Left ventricle myocardium superior (tissue), 1 donor: ENCODE measurements at regions of chr3 and their contacts with region 1.

Region 1: GRCh38 chr3:73432023-73432705 is 192.6 kb downstream of the PDZRN3 start:
- DNase-seq: peak; percentile 35
- ATAC-seq: peak; percentile 25

Region 2: DNA sequence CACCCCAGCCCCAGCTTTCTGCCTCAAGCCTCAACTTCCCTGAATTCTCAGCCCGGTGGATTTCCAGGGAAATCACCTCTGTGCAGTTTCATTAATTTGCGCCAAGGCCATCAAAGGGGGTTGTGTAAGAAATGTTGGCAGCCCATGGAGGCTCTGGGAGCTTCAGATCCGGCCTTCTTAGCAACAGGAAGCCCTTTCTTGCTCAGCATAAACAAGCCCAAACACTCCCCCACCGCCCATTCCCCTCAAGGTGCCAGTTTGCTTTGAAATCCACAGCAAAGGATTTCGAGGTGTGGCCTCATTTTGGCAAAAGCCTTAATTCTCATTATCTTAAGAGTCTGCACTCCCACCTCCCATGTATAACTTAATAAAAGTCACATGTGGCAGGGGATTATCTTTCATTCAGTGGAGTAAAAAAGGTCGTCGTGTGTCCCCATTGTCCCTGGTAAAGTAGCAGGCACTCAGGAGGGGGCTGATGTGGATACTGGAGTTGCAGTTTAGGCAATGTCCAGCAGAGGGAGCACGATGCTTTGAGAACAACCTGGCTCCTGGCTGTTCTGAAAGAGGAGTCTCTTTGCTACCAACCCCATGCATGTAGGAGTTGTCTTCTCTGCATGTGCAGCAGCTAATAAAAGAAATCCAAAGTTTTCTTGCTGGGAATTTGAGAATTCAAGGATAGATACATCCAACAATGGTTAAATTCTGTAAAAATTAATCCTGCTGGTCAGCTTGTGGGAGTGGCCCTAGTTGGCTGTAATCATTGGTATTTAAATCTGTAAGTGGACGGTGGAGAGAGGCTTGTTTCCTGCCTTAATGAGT is 331.2 kb before region 1 on chr3:
- intact Hi-C with region 1: loop called (anchors 10 kb)
- DNase-seq: peak; percentile 68
- ATAC-seq: peak; percentile 91

Region 3: DNA sequence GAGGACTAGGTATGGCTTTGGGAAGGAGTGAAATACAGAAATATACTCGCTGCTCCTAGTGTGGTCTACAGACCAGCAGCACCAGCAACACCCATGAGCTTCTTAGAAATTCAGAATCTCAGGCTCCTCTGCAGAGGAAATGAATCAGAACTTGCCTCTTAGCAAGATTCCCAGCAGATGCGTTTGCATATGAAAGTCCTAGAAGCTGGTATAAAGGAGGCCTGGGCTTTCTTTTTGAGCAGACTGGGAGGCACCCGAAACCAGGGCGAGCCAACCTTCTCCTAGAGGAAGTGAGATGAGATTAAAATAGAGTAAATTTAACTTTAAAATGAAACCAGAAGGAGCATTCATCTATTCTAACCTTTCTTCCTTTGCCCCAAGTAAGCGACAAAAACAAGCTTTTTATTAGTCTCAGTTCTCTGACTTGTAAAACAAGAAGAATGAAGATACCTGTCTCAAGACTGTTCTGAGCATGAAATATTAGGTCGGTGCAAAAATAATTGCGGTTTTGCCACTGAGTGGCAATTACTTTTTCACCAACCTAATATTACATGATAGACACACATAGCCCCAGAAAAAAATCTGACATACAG is 52.6 kb after region 1 on chr3:
- intact Hi-C with region 1: no loop called
- DNase-seq: no peak
- ATAC-seq: no peak